PC-9 (cell line): ENCODE measurements at regions of chr5 and their contacts with region 1.

Region 1: DNA sequence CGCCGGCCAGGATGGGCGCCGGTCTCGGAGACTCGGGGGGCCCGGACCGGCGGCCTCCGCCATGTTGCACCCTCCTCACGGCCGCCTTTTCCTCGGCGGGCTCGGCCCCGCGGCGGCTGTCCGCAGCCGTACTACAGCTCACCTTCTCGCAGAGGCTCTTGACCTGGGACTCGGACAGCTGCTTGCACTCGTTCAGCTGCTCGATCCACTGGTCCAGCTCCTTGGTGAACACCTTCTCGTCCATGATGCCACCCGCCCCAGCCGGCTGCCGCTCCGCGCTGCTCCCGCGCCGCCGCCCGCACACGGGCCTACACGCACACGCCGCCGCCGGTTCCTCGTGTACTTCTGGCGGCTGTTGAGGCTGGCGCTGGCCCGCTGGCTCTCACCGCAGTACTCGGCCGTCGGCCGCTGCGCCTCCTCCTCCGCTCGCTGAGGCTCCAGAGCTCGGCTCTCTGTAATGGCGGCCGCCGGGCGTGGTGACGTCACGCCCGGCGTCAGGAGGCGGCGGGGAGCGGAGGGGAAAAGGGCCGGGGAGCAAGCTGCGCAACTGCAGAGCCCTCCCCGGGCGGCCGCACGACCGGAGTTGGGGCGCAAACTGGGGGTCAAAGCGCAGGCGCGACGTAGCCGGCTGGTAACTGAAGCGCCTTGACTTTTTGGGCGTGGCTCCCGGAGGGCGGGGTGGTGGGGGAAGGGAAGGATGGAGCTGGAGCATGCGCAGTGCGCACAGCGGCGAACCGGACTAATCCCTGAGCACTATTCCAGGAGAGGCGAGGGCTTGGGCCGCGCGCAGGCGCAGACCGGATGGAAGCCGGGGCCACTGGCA is at the start of gene PPP2CA:
- DNase-seq: peak; percentile 92 to 100
- H3K4me3 ChIP-seq: peak within 1 kb of the TSS; percentile 79
- H3K27ac ChIP-seq: peak within 1 kb of the TSS; percentile 95
- H3K4me1 ChIP-seq: peaks cover 36% of the 10 kb centered on the region
- H3K27me3 ChIP-seq: no peaks in the 10 kb centered on the region
- CTCF ChIP-seq: peak; percentile 38; the same call in 1 of the 2 replicates
- total RNA-seq, gene PPP2CA: 146 and 149 TPM in 2 replicates

Region 2: GRCh38 chr5:134176511-134177368 is 49.1 kb before region 1 on chr5 and contains the start of gene SKP1:
- CTCF ChIA-PET with region 1: no interaction called
- POLR2A ChIA-PET with region 1: interaction called, 5 read pairs
- intact Hi-C with region 1: loop called (anchors 5 kb)
- DNase-seq: peak; percentile 59 to 84
- H3K4me3 ChIP-seq: peak within 1 kb of the TSS; percentile 93
- H3K27ac ChIP-seq: peak within 1 kb of the TSS; percentile 93
- H3K4me1 ChIP-seq: peaks cover 23% of the 10 kb centered on the region
- H3K27me3 ChIP-seq: no peaks in the 10 kb centered on the region
- CTCF ChIP-seq: no peak
- total RNA-seq, gene SKP1: 335 and 409 TPM in 2 replicates

Region 3: GRCh38 chr5:134184155-134185135 is 41.4 kb before region 1 on chr5:
- CTCF ChIA-PET with region 1: interaction called, 3 read pairs
- POLR2A ChIA-PET with region 1: interaction called, 11 read pairs
- intact Hi-C with region 1: loop called (anchors 5 kb)
- DNase-seq: peak; percentile 39 to 65
- H3K4me3 ChIP-seq: no peak overlapping the region
- H3K27ac ChIP-seq: no peak overlapping the region
- H3K4me1 ChIP-seq: no peaks in the 10 kb centered on the region
- H3K27me3 ChIP-seq: no peaks in the 10 kb centered on the region
- CTCF ChIP-seq: peak; percentile 90

Region 4: GRCh38 chr5:134275822-134276221 is 50.0 kb after region 1 on chr5:
- CTCF ChIA-PET with region 1: interaction called, 4 read pairs
- POLR2A ChIA-PET with region 1: interaction called, 25 read pairs
- intact Hi-C with region 1: loop called (anchors 2 kb)
- DNase-seq: no peak
- H3K4me3 ChIP-seq: no peak overlapping the region
- H3K27ac ChIP-seq: no peak overlapping the region
- H3K4me1 ChIP-seq: peaks cover 23% of the 10 kb centered on the region
- H3K27me3 ChIP-seq: no peaks in the 10 kb centered on the region
- CTCF ChIP-seq: no peak

Region 5: DNA sequence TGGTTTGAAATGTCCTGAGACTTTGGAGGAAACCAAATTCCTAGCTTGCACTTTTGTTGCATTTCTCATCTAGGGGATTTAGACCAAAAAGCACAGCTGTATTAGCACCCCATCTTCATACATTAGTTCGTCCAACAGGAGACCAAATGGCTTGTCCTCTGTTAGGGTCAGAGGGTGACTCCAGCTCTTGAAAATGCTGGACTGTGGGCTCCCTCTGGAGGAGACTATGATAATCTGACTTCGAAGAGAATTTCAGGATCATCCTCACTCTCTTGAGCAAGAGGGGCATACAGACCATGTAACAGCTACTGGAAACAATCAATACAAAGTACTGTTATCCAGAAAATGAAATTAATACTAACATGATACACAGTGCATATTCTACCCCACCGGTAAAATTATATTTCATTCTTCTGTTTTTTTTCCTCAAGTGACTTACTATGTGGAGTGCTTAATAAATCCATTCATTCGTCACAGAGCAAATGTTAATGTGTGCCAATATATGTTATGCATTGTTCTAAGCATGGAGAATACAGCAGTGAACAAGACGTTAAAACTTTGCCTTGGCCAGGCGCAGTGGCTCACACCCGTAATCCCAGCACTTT is 63.8 kb after region 1 on chr5:
- CTCF ChIA-PET with region 1: no interaction called
- POLR2A ChIA-PET with region 1: no interaction called
- intact Hi-C with region 1: loop called (anchors 1 kb)
- DNase-seq: peak; percentile 48 to 74
- H3K4me3 ChIP-seq: no peak overlapping the region
- H3K27ac ChIP-seq: no peak overlapping the region
- H3K4me1 ChIP-seq: no peaks in the 10 kb centered on the region
- H3K27me3 ChIP-seq: no peaks in the 10 kb centered on the region
- CTCF ChIP-seq: peak; percentile 91